A673 (cell line): ENCODE measurements at regions of chr5 and their contacts with region 1.

Region 1: DNA sequence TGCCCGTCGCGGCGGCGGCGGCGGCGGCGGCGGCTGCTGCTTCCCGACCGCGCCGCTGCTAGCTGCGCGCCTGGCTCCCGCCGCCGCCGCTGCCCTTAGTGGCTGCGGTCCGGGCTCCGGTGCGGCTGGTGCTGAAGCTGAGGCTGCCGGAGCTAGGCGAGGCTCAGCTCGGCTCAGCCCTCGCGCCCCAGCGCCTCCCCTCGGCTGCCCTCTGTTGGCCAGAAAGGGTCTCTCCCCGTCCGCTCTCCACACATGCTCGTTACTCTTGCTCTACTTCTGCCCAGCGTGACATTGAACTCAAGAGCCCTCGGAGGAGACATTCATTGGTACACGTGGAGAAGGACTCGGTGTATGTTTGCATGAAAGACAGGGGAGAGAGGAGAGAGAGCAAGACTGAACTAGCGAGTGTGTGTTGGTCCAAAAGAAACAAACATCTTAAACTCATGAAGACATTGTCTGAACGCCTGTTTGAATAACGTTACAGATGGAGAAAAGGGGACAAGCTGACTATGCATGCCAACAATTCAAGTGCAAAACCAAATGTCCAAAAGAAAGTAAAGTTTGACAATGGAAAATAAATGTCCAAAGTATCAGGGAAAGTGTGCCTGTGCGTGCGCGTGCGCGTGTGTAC is at the start of gene HCN1:
- DNase-seq: peak; percentile 88
- H3K4me3 ChIP-seq: peak within 1 kb of the TSS; percentile 25
- H3K27ac ChIP-seq: no peak within 1 kb of the TSS
- H3K4me1 ChIP-seq: peaks cover 8% of the 10 kb centered on the region
- H3K27me3 ChIP-seq: peaks cover 44% of the 10 kb centered on the region
- CTCF ChIP-seq: peak; percentile 86
- total RNA-seq, gene HCN1: 0.04 and 0.09 TPM in 2 replicates

Region 2: GRCh38 chr5:44943647-44944046 is 752.7 kb before region 1 on chr5:
- CTCF ChIA-PET with region 1: no interaction called
- POLR2A ChIA-PET with region 1: no interaction called
- intact Hi-C with region 1: loop called (anchors 5 kb)
- DNase-seq: no peak
- H3K4me3 ChIP-seq: no peak overlapping the region
- H3K27ac ChIP-seq: peak overlapping the region; percentile 30
- H3K4me1 ChIP-seq: peaks cover 31% of the 10 kb centered on the region
- H3K27me3 ChIP-seq: no peaks in the 10 kb centered on the region
- CTCF ChIP-seq: no peak

Region 3: GRCh38 chr5:45179686-45180085 is 516.6 kb before region 1 on chr5:
- CTCF ChIA-PET with region 1: no interaction called
- POLR2A ChIA-PET with region 1: no interaction called
- intact Hi-C with region 1: no loop called
- DNase-seq: no peak
- H3K4me3 ChIP-seq: no peak overlapping the region
- H3K27ac ChIP-seq: no peak overlapping the region
- H3K4me1 ChIP-seq: peaks cover 12% of the 10 kb centered on the region
- H3K27me3 ChIP-seq: no peaks in the 10 kb centered on the region
- CTCF ChIP-seq: no peak